K562 (cell line): ENCODE measurements at regions of chr3 and their contacts with region 1.

Region 1: DNA sequence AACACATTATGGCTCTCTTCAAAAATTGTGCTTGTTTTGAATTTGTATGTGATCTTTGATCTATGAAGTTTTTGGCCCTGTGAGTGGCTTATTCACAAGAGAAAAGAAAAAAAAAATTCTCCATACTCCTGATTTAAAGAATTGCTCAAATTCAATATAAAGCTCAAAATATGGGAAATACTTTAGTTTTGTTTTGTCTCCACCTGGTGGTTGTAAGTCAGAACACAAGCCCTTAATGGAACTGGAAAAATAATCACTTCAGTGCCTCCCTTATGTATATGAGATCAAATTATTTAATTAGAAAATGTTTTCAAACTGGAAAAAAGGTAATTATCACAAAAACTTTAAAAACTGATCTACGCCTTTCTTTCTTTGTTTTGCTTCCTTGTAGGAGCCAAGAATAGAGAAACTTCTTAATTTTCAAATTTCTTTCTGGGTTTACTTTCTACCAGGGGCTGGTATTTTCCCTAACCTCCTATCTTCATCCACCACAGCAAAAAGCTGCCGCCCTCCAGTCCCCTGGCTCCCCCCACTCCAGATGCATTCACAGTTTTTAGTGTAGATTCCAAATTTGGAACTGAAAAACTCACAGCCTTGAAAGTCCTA is 50.6 kb downstream of the SERP1 start:
- DNase-seq: peak; percentile 44 to 72 (median 50)
- ATAC-seq: peak; percentile 81
- H3K4me3 ChIP-seq: no peak overlapping the region
- H3K27ac ChIP-seq: peak overlapping the region; percentile 70; the same call in 1 of the 3 replicates
- H3K4me1 ChIP-seq: peaks cover 0 to 26% of the 10 kb centered on the region in 2 experiments; a peak in 4 of 5 replicates
- H3K27me3 ChIP-seq: no peaks in the 10 kb centered on the region
- CTCF ChIP-seq: peak; percentile 45 to 82 (median 64); a peak in 5 of 6 replicates
- EP300 ChIP-seq: no peak
- POLR2A ChIP-seq: no peak
- RAD21 ChIP-seq: peak; percentile 95 to 96

Region 2: DNA sequence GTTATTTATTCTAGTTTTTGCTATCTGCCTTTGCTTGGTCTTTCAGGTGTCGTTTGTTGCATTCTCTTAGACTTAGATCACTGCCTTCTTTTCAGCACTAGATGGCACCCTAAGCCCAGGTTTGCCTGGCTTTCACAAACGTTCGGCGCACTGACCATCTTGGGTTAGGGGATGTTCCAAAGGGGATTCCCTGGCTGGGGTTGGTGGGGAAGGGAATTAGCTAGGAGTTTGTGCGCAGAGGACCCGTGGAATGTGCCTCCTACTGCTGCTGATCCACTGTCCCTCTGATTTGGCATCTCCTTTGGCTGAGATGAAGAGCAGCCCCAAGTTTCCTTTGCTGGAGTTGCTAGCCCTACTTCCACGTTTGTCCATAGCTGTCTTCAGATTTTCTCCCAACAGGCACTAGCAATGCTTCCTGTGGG is 558.8 kb before region 1 on chr3:
- CTCF ChIA-PET with region 1: no interaction called
- POLR2A ChIA-PET with region 1: no interaction called
- in situ Hi-C with region 1: no loop called
- intact Hi-C with region 1: loop called (anchors 10 kb)
- DNase-seq: peak; percentile 35 to 69 (median 54)
- ATAC-seq: peak; percentile 90
- H3K4me3 ChIP-seq: no peak overlapping the region
- H3K27ac ChIP-seq: no peak overlapping the region
- H3K4me1 ChIP-seq: no peaks in the 10 kb centered on the region; a peak in 1 of 5 replicates
- H3K27me3 ChIP-seq: no peaks in the 10 kb centered on the region
- CTCF ChIP-seq: peak; percentile 70 to 80 (median 77)
- EP300 ChIP-seq: no peak
- POLR2A ChIP-seq: no peak
- RAD21 ChIP-seq: peak; percentile 64 to 76

Region 3: DNA sequence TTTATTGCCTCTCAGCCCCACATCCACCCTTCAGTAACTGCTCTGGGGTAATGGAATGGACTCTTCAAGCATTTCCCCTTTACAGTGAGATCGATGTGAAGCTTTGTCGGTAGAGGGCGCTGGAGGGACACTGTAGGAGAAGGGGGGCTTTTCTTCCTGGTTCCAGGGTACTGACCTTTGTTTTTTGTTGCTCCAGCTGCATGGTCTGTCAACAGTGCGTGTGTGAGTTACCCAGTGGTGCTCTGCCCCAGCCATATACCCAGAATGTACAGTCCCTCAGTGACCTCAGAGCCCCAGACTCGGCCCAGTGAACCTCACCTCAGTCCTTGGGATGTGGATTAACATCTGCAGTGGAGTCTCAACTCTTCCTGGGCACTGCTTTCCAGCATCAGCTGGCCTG is 267.8 kb before region 1 on chr3:
- CTCF ChIA-PET with region 1: interaction called, 10 read pairs
- POLR2A ChIA-PET with region 1: no interaction called
- in situ Hi-C with region 1: no loop called
- intact Hi-C with region 1: loop called (anchors 1 kb)
- DNase-seq: peak; percentile 58 to 78 (median 60)
- ATAC-seq: peak; percentile 94
- H3K4me3 ChIP-seq: no peak overlapping the region
- H3K27ac ChIP-seq: no peak overlapping the region
- H3K4me1 ChIP-seq: no peaks in the 10 kb centered on the region
- H3K27me3 ChIP-seq: peaks cover 7 to 24% of the 10 kb centered on the region in 2 experiments
- CTCF ChIP-seq: peak; percentile 77 to 86 (median 82)
- EP300 ChIP-seq: no peak
- POLR2A ChIP-seq: no peak
- RAD21 ChIP-seq: peak; percentile 60 to 85

Region 4: GRCh38 chr3:150286390-150287147 is 209.1 kb before region 1 on chr3:
- CTCF ChIA-PET with region 1: interaction called, 3 read pairs
- POLR2A ChIA-PET with region 1: no interaction called
- in situ Hi-C with region 1: no loop called
- intact Hi-C with region 1: loop called (anchors 1 kb)
- DNase-seq: peak; percentile 47 to 67 (median 60)
- ATAC-seq: peak; percentile 98
- H3K4me3 ChIP-seq: no peak overlapping the region
- H3K27ac ChIP-seq: no peak overlapping the region
- H3K4me1 ChIP-seq: 0 out of 5 replicates have a peak, but pooled peaks cover 0 to 2% of the 10 kb centered on the region in 2 experiments
- H3K27me3 ChIP-seq: no peaks in the 10 kb centered on the region
- CTCF ChIP-seq: peak; percentile 58 to 69 (median 63); a peak in 5 of 6 replicates
- EP300 ChIP-seq: no peak
- POLR2A ChIP-seq: no peak
- RAD21 ChIP-seq: peak; percentile 64 to 74

Region 5: GRCh38 chr3:150451329-150452048 is 44.2 kb before region 1 on chr3:
- CTCF ChIA-PET with region 1: no interaction called
- POLR2A ChIA-PET with region 1: no interaction called
- in situ Hi-C with region 1: no loop called
- intact Hi-C with region 1: loop called (anchors 2 kb)
- DNase-seq: peak; percentile 33 to 83 (median 50)
- ATAC-seq: peak; percentile 72
- H3K4me3 ChIP-seq: peak overlapping the region; percentile 5; the same call in 1 of the 2 replicates
- H3K27ac ChIP-seq: peak overlapping the region; percentile 85
- H3K4me1 ChIP-seq: peaks cover 26 to 53% of the 10 kb centered on the region in 2 experiments
- H3K27me3 ChIP-seq: no peaks in the 10 kb centered on the region
- CTCF ChIP-seq: no peak
- EP300 ChIP-seq: peak; percentile 97
- POLR2A ChIP-seq: no peak
- RAD21 ChIP-seq: peak in 1 of 2 experiments; percentile 14; a peak in 1 of 4 replicates

Region 6: DNA sequence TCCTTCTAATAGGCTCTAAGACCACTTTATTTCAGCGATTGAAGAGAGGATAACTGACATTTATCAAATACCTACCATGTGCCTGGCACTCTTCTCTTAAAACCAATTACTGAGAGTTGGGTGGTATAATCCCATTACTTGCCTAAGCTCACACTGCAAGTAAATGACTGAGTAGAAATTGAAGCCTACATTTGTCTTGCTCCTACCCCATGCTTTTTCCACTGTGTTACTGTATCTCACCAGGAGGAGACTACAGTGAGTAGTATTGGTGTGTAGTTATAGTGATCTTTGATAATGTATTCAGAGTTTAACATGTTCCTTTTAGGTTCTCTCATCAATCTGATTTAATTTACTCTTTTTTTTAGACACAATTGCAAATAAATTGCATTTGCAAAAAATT is 71.7 kb after region 1 on chr3:
- CTCF ChIA-PET with region 1: no interaction called
- POLR2A ChIA-PET with region 1: no interaction called
- in situ Hi-C with region 1: no loop called
- intact Hi-C with region 1: no loop called
- DNase-seq: no peak
- ATAC-seq: peak; percentile 54
- H3K4me3 ChIP-seq: no peak overlapping the region
- H3K27ac ChIP-seq: no peak overlapping the region
- H3K4me1 ChIP-seq: no peaks in the 10 kb centered on the region
- H3K27me3 ChIP-seq: no peaks in the 10 kb centered on the region
- CTCF ChIP-seq: no peak
- EP300 ChIP-seq: no peak
- POLR2A ChIP-seq: no peak
- RAD21 ChIP-seq: no peak